Left cardiac atrium (tissue), 4 donors: ENCODE measurements at regions of chr6 and their contacts with region 1.

Region 1: DNA sequence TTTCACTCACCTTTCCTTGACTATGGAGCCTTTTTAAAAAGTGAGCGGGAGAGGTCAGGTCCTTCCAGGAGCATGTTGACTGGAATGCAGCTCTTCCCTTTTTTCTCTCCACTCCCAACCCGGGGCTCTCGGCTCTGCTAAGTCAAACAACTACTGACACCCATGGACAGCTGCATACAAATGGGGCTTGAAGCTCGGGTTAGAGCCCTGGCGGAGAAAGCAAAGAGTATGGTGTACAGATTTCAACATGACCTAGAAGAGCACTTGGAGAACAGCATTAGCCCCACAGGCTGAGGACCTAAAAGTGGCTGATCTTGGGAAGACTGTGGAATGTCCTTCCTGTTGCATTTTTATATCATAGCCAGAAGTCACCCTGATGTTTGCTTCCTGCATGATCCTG is 162.0 kb upstream of the STMND1 start:
- DNase-seq: no peak
- ATAC-seq: no peak

Region 2: DNA sequence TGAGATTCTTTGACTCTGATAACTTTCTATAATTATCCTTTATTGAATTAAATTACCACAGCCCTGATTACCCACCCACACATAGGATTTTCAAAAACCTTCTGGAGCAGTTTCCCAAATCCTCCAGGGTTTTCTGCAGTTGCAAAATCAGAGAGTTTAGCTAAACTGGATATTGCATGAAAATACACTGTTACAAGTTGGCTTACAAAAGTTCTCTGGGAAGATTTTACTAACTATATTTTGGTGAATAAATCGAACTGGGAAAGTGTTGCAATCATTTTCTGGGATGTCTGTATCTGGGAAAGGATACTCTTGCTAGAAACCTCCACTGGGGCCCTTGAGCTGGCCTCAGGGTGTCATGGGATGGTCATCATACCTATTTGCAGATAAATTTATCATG is 64.4 kb after region 1 on chr6:
- intact Hi-C with region 1: loop called in 1 of 2 experiments (anchors 2 kb)
- DNase-seq: no peak
- ATAC-seq: peak in 1 of 2 donors; percentile 41